Right lobe of liver (tissue), 6 donors: ENCODE measurements at regions of chr19 and their contacts with region 1.

Region 1: DNA sequence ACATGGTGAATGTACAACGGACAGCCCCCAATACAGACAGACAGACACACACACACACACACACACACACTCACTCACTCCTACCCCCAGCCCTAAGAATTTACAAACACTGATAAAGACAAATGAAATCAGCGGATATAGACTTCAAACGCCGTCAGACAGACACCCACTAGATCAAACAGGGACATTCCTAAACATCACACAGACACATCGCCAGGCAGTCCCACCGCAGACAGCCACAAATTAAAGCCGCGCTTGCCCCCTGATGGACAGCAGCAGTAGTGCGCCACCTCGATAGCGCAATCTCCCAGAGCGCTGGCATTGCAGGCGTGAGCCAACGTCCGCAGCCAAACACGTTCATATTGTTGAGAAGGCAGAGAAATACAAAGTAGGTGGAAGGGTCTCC is 24.7 kb upstream of the ADGRE1 start:
- DNase-seq: peak; percentile 78 to 86 (median 84)
- ATAC-seq: peak; percentile 92 to 94 (median 92)
- H3K4me3 ChIP-seq: peak overlapping the region in 1 of 3 donors; percentile 41
- H3K27ac ChIP-seq: no peak overlapping the region
- H3K4me1 ChIP-seq: peaks cover 0 to 7% (median 0%) of the 10 kb centered on the region in 4 donors
- H3K27me3 ChIP-seq: no peaks in the 10 kb centered on the region
- CTCF ChIP-seq: peak; percentile 77 to 91 (median 83)
- POLR2A ChIP-seq: no peak

Region 2: GRCh38 chr19:6516659-6517291 is 345.9 kb before region 1 on chr19:
- intact Hi-C with region 1: loop called (anchors 10 kb)
- DNase-seq: peak; percentile 88 to 93 (median 90)
- ATAC-seq: peak; percentile 76 to 86 (median 79)
- H3K4me3 ChIP-seq: peak overlapping the region; percentile 56 to 61 (median 59)
- H3K27ac ChIP-seq: peak overlapping the region; percentile 44 to 59 (median 47)
- H3K4me1 ChIP-seq: peaks cover 0 to 3% (median under 1%) of the 10 kb centered on the region in 4 donors
- H3K27me3 ChIP-seq: no peaks in the 10 kb centered on the region
- CTCF ChIP-seq: peak; percentile 94 to 98 (median 96)
- POLR2A ChIP-seq: peak; percentile 14

Region 3: DNA sequence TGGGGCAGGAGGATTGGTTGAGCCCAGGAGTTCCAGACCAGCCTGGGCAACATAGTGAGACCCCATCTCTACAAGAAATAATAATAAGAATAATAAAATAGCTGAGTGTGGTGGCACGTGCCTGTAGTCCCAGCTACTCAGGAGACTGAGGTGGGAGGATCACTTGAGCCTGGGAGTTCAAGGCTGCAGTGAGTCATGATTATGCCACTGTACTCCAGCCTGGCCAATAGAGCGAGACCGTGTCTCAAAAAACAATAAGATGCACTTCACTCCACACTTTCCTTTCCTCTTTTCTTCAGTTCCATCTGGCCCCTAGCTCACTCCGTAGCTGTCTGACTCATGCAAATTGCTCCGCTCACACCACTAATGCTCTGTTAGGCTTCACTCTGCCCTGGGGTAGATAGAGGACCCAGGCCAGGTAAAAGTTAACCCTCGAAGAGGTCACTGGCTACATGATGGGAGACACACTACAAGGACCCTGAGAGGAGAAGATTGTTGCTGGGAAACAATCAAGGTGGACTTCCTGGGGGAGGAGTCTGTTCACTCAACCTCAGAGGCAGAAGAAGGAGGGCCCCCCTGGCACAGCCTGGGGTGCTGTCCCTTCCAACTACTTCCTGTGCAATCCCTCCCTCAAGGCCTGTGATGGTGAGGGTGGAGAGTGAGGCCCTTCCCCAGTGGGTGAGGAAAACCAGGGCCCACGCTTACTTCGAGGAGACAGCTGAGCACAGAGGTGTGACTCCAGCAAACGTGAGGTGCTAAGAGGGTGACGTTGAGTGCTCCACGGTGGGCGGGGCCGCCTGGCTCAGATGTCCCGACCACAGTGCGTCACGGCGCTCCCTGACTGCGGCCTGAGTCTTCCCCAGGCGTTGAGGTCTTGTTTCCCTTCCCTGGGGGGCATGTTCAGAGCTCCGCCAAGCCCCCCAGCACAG is 340.7 kb before region 1 on chr19:
- intact Hi-C with region 1: loop called (anchors 10 kb)
- DNase-seq: no peak
- ATAC-seq: peak in 3 of 4 donors; percentile 39 to 53 (median 49)
- H3K4me3 ChIP-seq: no peak overlapping the region
- H3K27ac ChIP-seq: no peak overlapping the region
- H3K4me1 ChIP-seq: peaks cover 0 to 2% (median under 1%) of the 10 kb centered on the region in 4 donors
- H3K27me3 ChIP-seq: no peaks in the 10 kb centered on the region
- CTCF ChIP-seq: no peak
- POLR2A ChIP-seq: no peak

Region 4: DNA sequence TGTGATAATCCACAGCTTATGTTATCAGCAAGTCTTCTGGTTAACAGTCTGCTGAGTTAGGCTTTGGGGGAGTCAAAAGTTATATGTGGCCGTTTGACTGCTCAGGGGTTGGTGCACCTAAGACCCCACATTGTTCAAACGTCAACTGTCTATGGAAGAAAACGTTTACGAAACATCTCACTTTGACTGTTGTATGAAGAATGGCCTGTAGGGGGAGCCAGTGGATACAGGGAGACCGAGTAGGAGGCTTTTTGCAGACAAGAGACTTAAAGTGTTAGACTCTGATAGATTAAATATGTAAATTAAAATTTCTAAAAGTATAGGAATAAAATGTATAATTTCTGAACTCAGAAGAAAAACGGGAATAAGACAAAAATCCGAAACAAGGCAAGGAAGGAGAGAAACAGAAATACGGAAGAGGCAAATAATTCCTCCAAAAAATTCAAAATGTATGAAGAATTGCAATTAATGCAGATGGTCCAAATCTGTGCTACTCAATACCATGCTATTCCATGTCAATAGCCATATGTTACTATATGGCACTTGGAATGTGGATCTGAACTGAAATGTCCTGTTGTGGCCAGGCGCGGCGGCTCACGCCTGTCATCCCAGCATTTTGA is 230.6 kb before region 1 on chr19:
- intact Hi-C with region 1: loop called (anchors 10 kb)
- DNase-seq: peak in 1 of 3 donors; percentile 72
- ATAC-seq: peak; percentile 79 to 91 (median 85)
- H3K4me3 ChIP-seq: no peak overlapping the region
- H3K27ac ChIP-seq: no peak overlapping the region
- H3K4me1 ChIP-seq: no peaks in the 10 kb centered on the region
- H3K27me3 ChIP-seq: no peaks in the 10 kb centered on the region
- CTCF ChIP-seq: peak; percentile 80 to 87 (median 86)
- POLR2A ChIP-seq: no peak

Region 5: DNA sequence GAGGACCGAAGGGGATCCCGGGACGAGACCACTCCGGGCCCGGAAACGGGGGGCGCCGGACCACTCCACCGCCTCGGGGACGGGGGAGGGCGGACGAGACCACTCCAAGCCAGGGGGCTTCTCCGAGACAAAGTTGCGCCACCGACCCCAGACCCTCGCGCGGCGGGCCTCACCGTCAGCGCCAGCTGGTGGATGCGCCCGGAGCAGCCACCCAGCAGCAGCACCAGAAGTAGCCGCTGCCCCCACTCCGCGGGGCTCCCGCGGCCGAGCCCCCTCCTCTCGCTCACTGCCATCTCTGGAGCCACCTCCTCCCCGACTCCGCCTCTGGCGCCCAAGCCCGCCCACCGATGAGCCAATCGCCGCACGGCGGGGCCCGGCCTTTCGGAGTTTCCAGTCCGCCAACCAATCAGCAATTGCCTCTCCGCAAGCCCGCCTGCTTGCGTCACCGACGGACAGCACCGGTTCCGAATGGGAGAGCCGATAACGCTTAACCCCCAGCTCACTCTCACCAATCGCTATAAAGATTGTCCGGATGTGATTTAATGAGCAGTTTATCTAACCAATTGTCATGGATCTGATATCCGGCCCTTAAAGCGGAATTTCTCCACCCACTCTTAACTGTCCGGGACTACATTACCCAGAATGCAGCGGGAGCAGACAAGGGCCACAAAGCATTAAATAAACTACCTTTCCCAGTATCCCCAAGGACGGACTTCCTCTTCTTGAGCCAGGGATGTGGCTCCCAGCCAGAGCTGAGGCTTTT is 125.2 kb before region 1 on chr19 and contains the start of gene GPR108:
- intact Hi-C with region 1: loop called (anchors 10 kb)
- DNase-seq: peak; percentile 99 to 100 (median 100)
- ATAC-seq: peak; percentile 60 to 83 (median 76)
- H3K4me3 ChIP-seq: peak within 1 kb of the TSS; percentile 82 to 96 (median 94)
- H3K27ac ChIP-seq: peak within 1 kb of the TSS; percentile 84 to 97 (median 95)
- H3K4me1 ChIP-seq: peaks cover 4 to 35% (median 18%) of the 10 kb centered on the region in 4 donors
- H3K27me3 ChIP-seq: no peaks in the 10 kb centered on the region
- CTCF ChIP-seq: no peak
- POLR2A ChIP-seq: peak; percentile 65
- total RNA-seq, gene GPR108: 22.3 to 53.0 (median 41.3) TPM